Posterior vena cava (tissue), 2 donors: ENCODE measurements at regions of chr7 and their contacts with region 1.

Region 1: GRCh38 chr7:120344276-120344675 is 71.3 kb downstream of the KCND2 start:
- DNase-seq: no peak

Region 2: GRCh38 chr7:119783799-119784198 is 560.5 kb before region 1 on chr7:
- intact Hi-C with region 1: loop called in 1 of 2 experiments (anchors 5 kb)
- DNase-seq: peak; percentile 40

Region 3: GRCh38 chr7:120280743-120281142 is 63.5 kb before region 1 on chr7:
- intact Hi-C with region 1: no loop called
- DNase-seq: no peak

Region 4: DNA sequence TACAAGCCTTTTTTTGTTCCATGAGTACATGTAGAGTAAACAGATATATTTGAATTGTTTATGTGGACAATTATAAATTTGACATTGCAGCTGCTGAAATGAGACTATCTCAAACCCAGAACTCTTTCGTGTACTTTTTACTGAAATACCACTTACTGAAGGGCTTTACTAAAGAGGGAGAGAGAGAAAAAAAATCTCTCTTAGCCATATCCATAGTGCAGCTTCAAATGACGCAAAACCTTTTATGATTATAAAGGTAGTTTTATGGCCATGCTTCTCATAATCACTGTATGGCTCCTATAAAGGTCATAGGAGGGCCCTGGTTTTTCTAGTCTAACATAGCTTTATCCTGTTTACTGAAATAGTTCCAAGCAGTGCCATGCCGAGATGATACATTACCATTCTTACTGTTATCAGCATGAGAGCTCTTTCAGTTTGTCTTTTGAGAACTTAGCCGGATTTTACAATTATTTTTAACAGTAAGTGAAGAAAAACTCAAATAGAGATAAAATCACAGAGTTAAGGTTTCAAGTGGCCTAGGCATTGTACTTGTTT is 36.2 kb before region 1 on chr7:
- intact Hi-C with region 1: no loop called
- DNase-seq: no peak